ENCODE measurements at regions of chr7 and their contacts with region 1.

Region 1: DNA sequence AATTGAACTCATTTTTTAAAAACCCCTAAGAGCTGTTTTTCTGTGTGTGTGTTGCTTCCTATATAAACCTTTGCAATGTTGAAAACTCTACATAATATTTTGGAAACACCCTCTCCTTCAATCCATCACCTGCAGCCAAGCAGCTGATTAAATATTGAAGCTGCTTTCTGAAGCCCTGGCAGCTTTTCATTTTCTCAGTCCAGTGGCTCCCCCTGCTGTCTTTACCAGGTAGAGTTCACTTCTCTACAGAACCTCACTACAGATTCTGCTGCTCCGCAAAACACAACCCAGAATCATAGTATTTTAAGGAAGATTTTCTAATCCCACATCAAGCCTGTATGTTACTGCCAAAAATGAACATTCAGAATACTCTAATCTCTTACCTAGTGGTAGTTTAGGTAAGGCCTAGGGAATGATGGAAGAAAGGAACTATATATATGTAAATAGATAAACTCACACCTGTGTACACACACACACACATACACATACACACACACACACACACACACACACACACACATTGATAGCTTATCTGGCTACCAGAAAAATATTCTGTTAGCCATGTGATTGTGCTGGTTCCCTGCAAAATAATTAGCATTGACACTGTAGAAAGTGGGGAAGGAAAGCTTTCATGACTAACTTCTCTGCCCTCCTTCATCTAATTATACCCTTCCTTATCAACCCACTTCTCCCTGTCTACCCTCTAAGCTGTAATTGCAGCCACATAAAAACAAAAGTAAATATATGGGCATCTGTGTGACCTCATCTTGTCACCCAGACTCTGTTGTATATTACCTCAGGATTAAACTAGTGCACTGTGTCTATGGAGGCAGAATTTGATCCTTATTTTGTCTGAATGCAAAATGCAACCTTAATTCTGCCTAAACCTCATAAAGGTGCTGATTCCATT is 229.5 kb upstream of the FZD1 start:
- DNase-seq: no peak
- H3K4me3 ChIP-seq: no peak overlapping the region
- H3K27ac ChIP-seq: no peak overlapping the region
- H3K4me1 ChIP-seq: no peaks in the 10 kb centered on the region
- H3K27me3 ChIP-seq: no peaks in the 10 kb centered on the region
- CTCF ChIP-seq: peak; percentile 62 to 64 (median 63)
- EP300 ChIP-seq: no peak
- POLR2A ChIP-seq: no peak

Region 2: DNA sequence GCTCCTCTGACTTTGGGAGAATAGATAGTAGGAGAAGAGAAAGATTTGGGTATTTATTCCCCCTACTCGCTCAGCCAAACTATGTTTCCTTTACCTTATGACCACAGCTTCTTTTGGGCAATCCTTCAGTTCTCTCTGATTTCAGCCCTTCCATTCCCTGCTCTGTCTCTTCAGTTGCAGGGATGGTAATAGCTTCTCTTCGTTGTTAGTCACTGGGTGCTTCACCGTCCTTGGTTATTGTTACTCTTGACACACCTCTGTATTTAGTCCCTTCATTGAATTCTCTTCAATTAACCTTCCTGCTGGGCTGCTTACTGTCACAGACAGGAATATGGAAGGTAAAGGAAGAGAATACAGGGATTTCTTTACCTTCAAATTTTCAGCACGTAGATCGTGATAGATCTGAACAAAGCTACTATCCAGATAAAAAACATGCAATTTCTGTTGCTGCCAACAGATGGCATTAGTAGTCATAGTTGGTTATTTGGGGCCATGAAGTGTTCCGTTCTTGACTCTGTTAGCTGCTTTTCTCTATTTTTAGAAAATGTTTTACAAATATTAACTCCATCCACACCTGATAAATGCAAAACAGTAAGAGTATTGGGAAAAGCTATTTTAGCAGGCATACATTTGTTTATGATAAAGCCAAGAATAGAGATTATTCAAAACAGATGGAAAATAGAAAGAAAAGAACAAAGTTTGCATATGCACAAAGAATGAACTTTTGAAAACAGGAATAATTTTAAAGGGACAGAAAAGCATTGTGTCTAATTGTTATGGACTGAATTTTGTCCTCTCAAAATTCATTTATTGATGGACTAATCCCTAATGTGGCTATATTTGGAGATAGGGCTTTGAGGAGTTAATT is 579.3 kb before region 1 on chr7:
- intact Hi-C with region 1: loop called (anchors 2 kb)
- DNase-seq: no peak
- H3K4me3 ChIP-seq: peak overlapping the region in 3 of 4 donors; percentile 19 to 26 (median 25)
- H3K27ac ChIP-seq: no peak overlapping the region
- H3K4me1 ChIP-seq: peaks cover 0 to 9% (median 4%) of the 10 kb centered on the region in 4 donors
- H3K27me3 ChIP-seq: no peaks in the 10 kb centered on the region
- CTCF ChIP-seq: peak; percentile 60 to 65 (median 64)
- EP300 ChIP-seq: no peak
- POLR2A ChIP-seq: no peak

Region 3: GRCh38 chr7:90552521-90552920 is 482.2 kb before region 1 on chr7:
- intact Hi-C with region 1: loop called (anchors 10 kb)
- DNase-seq: no peak
- H3K4me3 ChIP-seq: no peak overlapping the region
- H3K27ac ChIP-seq: no peak overlapping the region
- H3K4me1 ChIP-seq: no peaks in the 10 kb centered on the region
- H3K27me3 ChIP-seq: no peaks in the 10 kb centered on the region
- CTCF ChIP-seq: peak; percentile 12 to 33 (median 27)
- EP300 ChIP-seq: no peak
- POLR2A ChIP-seq: no peak

Region 4: DNA sequence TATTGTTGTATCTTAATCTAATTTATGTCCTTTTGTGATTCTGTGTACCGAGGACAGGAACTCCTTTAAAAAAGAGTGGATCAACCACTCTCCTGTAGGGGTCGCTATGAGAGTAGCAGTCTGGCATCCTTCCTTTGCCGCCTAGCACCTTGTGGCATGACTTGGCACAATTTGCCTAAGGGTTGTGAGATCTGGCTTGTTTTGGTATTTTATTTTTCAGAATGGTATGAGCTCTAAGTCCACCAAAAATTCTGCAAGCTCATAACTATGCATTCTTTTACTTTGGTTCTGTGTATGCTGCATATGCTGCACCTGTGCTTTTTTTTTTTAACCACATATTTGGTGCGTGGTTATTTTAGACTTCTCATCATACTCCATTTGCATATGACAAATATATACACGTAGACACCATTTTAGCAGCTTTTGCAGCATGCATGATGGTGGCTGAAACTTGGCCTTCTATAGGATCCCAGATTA is 325.8 kb before region 1 on chr7:
- intact Hi-C with region 1: loop called (anchors 10 kb)
- DNase-seq: no peak
- H3K4me3 ChIP-seq: no peak overlapping the region
- H3K27ac ChIP-seq: no peak overlapping the region
- H3K4me1 ChIP-seq: peaks cover 27 to 38% (median 31%) of the 10 kb centered on the region in 4 donors
- H3K27me3 ChIP-seq: no peaks in the 10 kb centered on the region
- CTCF ChIP-seq: peak; percentile 39 to 53 (median 40)
- EP300 ChIP-seq: no peak
- POLR2A ChIP-seq: no peak